WTC11 (cell line): ENCODE measurements at regions of chr2 and their contacts with region 1.

Region 1: GRCh38 chr2:42663106-42663780 is 94.8 kb downstream of the MTA3 start:
- DNase-seq: peak; percentile 68
- ATAC-seq: peak; percentile 93
- H3K4me3 Mint-ChIP-seq: no peak overlapping the region
- H3K27ac Mint-ChIP-seq: peak overlapping the region; percentile 92
- H3K4me1 Mint-ChIP-seq: peaks cover 39% of the 10 kb centered on the region
- H3K27me3 Mint-ChIP-seq: no peaks in the 10 kb centered on the region
- CTCF ChIP-seq: peak; percentile 92

Region 2: DNA sequence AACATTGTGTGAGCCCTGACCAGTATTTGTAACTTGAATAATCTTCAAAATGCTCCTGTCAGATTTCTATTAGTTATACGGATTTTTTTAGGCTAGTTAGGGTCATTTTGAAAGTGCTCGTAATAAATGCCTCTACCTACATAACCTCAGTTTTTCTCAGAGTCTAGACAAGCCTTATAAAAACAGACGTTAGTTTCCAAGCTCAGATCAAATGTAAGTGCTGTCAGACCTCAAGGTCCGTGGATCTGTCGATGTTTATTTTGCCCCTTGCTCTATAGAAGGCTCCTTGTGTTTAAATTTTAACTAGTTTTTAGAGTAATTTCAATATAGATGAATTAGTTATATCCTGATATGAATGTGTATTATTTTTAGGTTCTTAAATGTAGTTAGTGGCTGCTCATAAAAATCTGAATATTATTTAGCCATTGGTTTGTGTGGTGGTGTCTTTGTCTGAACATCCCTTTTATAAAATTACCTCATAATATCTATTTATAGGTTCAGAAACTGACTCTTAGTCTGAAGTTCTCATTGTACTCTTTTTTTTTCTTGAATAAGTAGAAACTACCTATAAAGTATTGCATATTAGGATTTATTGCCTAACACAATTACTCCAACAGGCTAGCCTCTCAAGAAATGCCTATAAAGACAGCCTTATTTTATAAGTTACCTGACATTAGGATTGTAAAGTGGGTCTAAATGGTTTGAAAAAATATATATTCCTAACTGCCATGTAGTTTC is 23.7 kb before region 1 on chr2:
- CTCF ChIA-PET with region 1: interaction called, 13 read pairs
- POLR2A ChIA-PET with region 1: interaction called, 4 read pairs
- DNase-seq: no peak
- ATAC-seq: no peak
- H3K4me3 Mint-ChIP-seq: no peak overlapping the region
- H3K27ac Mint-ChIP-seq: peak overlapping the region; percentile 72
- H3K4me1 Mint-ChIP-seq: peaks cover 23% of the 10 kb centered on the region
- H3K27me3 Mint-ChIP-seq: no peaks in the 10 kb centered on the region
- CTCF ChIP-seq: no peak

Region 3: GRCh38 chr2:42673989-42674579 is 10.8 kb after region 1 on chr2:
- CTCF ChIA-PET with region 1: interaction called, 23 read pairs
- POLR2A ChIA-PET with region 1: interaction called, 3 read pairs
- DNase-seq: no peak
- ATAC-seq: no peak
- H3K4me3 Mint-ChIP-seq: no peak overlapping the region
- H3K27ac Mint-ChIP-seq: peak overlapping the region; percentile 54; the same call in 1 of the 2 replicates
- H3K4me1 Mint-ChIP-seq: peaks cover 21% of the 10 kb centered on the region
- H3K27me3 Mint-ChIP-seq: no peaks in the 10 kb centered on the region
- CTCF ChIP-seq: no peak

Region 4: DNA sequence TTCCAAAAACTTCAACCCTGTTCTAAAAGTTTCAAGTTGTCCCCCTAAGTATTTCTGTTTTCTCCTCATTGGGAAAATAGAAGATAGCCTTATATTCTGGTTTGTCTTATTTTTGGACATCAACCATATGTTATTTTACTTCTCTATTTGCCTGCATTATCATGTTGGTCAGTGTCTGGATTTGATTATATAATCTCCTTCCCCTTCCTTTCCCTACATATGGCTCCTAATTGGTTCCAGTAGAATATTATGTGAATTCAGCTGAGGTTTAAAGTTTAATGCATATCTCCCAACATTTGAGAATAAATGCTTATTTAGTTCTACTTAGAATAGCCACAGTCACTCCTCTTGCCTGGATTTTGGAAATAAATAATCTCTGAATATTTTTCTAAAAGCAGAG is 33.7 kb after region 1 on chr2:
- CTCF ChIA-PET with region 1: no interaction called
- POLR2A ChIA-PET with region 1: no interaction called
- DNase-seq: no peak
- ATAC-seq: no peak
- H3K4me3 Mint-ChIP-seq: no peak overlapping the region
- H3K27ac Mint-ChIP-seq: no peak overlapping the region; the same call in 1 of the 2 replicates
- H3K4me1 Mint-ChIP-seq: peaks cover 11% of the 10 kb centered on the region
- H3K27me3 Mint-ChIP-seq: no peaks in the 10 kb centered on the region
- CTCF ChIP-seq: no peak

Region 5: GRCh38 chr2:42823744-42824453 is 160.7 kb after region 1 on chr2:
- CTCF ChIA-PET with region 1: no interaction called
- POLR2A ChIA-PET with region 1: no interaction called
- DNase-seq: no peak
- ATAC-seq: no peak
- H3K4me3 Mint-ChIP-seq: no peak overlapping the region
- H3K27ac Mint-ChIP-seq: no peak overlapping the region
- H3K4me1 Mint-ChIP-seq: 0 out of 2 replicates have a peak, but pooled peaks cover 4% of the 10 kb centered on the region
- H3K27me3 Mint-ChIP-seq: peaks cover 16% of the 10 kb centered on the region
- CTCF ChIP-seq: no peak